Activated B cell treated with CpG ODN at 0.5 μM for 24 hours (primary cell): ENCODE measurements at regions of chr17 and their contacts with region 1.

Region 1: GRCh38 chr17:54269881-54270280 is 447.2 kb downstream of the KIF2B start:
- DNase-seq: no peak
- ATAC-seq: no peak
- H3K4me3 Mint-ChIP-seq: no peak overlapping the region
- H3K27ac Mint-ChIP-seq: no peak overlapping the region
- H3K4me1 Mint-ChIP-seq: no peaks in the 10 kb centered on the region
- H3K27me3 Mint-ChIP-seq: no peaks in the 10 kb centered on the region
- CTCF ChIP-seq: no peak

Region 2: GRCh38 chr17:54235571-54235970 is 34.3 kb before region 1 on chr17:
- CTCF ChIA-PET with region 1: no interaction called
- POLR2A ChIA-PET with region 1: no interaction called
- intact Hi-C with region 1: no loop called
- DNase-seq: no peak
- ATAC-seq: no peak
- H3K4me3 Mint-ChIP-seq: no peak overlapping the region
- H3K27ac Mint-ChIP-seq: no peak overlapping the region
- H3K4me1 Mint-ChIP-seq: no peaks in the 10 kb centered on the region
- H3K27me3 Mint-ChIP-seq: no peaks in the 10 kb centered on the region
- CTCF ChIP-seq: no peak

Region 3: DNA sequence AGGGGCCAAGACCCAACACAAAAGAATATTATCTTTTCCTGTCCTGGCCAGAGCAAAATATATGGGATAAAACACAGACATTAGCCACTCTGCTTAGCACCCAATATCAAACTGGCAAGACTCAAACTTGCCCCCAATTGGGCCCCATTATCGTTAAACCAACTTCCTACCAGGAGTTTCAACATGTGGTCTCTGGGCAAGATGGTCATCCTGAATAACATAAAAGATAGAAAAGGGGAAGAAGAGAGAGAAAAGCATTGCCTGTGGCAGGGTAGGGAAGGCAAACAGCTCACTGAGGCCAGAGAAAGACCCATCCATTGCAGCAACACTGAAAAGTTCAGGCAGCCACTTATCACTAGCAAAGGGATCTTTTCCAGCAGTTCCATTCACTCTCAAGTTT is 54.9 kb after region 1 on chr17:
- CTCF ChIA-PET with region 1: no interaction called
- POLR2A ChIA-PET with region 1: no interaction called
- intact Hi-C with region 1: loop called (anchors 10 kb)
- DNase-seq: no peak
- ATAC-seq: no peak
- H3K4me3 Mint-ChIP-seq: no peak overlapping the region
- H3K27ac Mint-ChIP-seq: no peak overlapping the region
- H3K4me1 Mint-ChIP-seq: no peaks in the 10 kb centered on the region
- H3K27me3 Mint-ChIP-seq: no peaks in the 10 kb centered on the region
- CTCF ChIP-seq: no peak